Motor neuron (in vitro differentiated cells): ENCODE measurements at regions of chr19 and their contacts with region 1.

Region 1: GRCh38 chr19:9645472-9645871 is 24.4 kb upstream of the ZNF561 start:
- ATAC-seq: peak in 3 of 8 experiments; percentile 33 to 62 (median 37)
- H3K4me3 ChIP-seq: no peak overlapping the region
- H3K27ac ChIP-seq: no peak overlapping the region
- H3K4me1 ChIP-seq: no peaks in the 10 kb centered on the region

Region 2: GRCh38 chr19:9381367-9381785 is 264.1 kb before region 1 on chr19:
- in situ Hi-C with region 1: no loop called
- ATAC-seq: no peak
- H3K4me3 ChIP-seq: no peak overlapping the region
- H3K27ac ChIP-seq: no peak overlapping the region
- H3K4me1 ChIP-seq: no peaks in the 10 kb centered on the region

Region 3: DNA sequence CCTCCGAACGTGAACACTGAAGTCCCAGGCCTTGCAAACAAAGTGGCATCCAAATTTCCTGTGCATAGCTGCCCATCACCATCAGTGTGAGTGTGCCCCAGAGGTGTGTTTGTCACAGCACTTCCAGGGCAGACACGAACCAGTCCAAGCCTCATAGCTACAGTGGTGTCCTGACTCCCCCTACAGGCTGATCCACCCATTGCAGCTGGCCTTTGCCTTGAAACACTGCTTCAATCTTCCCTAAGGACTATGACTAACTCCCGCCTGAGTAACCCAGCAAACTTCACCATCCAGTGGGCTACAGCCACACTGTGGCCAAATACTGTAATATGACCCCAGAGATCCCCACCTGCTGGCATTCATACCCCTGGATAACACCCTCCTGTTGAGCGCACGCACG is 214.0 kb before region 1 on chr19:
- in situ Hi-C with region 1: no loop called
- ATAC-seq: peak in 1 of 8 experiments; percentile 9
- H3K4me3 ChIP-seq: no peak overlapping the region
- H3K27ac ChIP-seq: no peak overlapping the region
- H3K4me1 ChIP-seq: peaks cover 9 to 13% of the 10 kb centered on the region in 2 donors

Region 4: GRCh38 chr19:9487016-9487415 is 158.5 kb before region 1 on chr19:
- in situ Hi-C with region 1: no loop called
- ATAC-seq: no peak
- H3K4me3 ChIP-seq: no peak overlapping the region
- H3K27ac ChIP-seq: no peak overlapping the region
- H3K4me1 ChIP-seq: no peaks in the 10 kb centered on the region

Region 5: DNA sequence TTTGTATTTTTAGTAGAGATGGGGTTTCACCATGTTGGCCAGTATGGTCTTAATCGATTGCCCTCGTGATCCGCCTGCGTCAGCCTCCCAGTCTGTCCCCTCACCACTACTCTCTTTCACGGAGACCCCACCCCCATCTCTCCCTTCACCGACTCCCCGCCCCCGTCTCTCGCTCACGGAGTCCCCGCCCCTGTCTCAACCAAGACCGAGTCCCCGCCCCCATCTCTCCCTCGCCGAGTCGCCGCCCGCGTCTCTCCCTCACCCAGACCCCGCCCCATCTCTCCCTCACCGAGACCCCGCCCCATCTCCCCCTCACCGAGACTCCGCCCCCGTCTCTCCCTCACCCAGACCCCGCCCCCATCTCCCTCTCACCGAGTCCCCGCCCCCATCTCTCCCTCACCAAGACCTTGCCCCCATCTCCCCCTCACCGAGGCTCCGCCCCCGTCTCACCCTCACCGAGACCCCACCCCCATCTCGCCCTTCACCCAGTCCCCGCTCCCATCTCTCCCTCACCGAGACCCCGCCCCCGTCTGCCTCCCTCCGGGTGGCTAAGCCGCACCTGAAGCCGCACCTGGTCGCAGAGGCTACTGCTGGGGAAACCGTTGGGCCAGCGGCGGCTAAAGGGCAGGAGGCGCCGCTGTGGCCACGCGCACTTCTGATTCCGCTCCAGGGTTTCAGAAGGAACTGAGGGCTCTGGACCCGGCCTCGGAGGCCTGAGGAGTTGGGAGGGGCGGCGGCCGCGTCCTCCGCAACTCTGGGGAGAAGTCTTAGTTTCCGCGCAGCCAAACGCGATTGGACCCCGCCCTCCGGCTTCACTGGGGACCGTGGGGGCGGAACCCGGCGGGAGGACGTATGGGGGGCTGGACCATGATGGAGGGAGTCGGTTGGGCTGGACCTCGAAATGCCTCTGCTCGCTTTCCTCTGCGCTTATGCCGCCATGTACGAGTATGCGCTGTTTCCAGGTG is 140.2 kb after region 1 on chr19:
- in situ Hi-C with region 1: loop called in 3 of 9 experiments (anchors 25 kb)
- ATAC-seq: peak; percentile 78 to 88 (median 82)
- H3K4me3 ChIP-seq: peak overlapping the region; percentile 55 to 85 (median 61)
- H3K27ac ChIP-seq: peak overlapping the region; percentile 96 to 98
- H3K4me1 ChIP-seq: peaks cover 29 to 31% of the 10 kb centered on the region in 2 donors